ENCODE measurements at regions of chr10 and their contacts with region 1.

Region 1: DNA sequence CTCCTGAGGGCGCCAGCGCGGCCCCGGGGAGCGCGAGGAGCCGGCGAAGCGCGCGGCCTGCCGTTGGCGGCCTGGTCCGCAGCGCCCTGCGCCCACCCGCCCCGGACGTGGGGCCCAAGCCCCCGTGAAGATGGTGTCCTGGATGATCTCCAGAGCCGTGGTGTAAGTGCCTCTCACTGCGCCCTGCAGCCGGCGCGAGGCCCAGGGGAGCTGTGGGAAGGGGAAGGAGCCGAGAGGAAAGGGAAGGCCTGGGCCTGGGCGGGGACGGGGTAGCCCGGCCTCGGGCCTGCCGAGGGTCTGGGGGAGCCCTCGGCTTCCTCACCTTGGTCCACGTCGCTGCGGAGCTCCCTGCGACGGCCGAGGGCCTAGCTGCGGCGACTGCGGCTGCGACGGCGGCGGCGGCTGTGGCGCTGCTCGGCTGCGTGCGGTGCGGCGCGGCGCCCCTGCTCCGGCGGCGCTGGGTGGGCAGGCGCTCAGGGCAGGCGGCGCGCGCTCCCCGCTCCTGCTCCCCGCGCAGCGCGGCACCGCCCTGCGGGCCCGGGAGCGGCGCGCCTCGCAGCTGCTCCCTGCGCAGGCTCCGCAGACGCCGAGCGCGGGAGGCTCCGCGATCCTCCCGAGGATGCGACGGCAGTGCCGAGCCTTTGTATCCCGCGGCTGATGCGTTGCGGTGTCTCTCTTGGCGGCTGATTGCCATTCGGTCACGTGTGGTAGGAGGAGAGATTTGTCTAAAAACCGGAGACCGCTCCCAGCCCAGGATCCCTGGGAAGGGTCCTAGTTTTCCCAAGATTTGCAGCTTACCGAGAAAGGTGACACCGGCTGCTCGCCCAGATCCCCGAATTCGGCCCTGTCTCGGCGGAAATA is 445 bp downstream of the REEP3 start:
- H3K4me3 ChIP-seq: peak overlapping the region; percentile 95
- H3K27ac ChIP-seq: peak overlapping the region; percentile 99
- H3K4me1 ChIP-seq: peaks cover 13% of the 10 kb centered on the region
- CTCF ChIP-seq: peak; percentile 62

Region 2: DNA sequence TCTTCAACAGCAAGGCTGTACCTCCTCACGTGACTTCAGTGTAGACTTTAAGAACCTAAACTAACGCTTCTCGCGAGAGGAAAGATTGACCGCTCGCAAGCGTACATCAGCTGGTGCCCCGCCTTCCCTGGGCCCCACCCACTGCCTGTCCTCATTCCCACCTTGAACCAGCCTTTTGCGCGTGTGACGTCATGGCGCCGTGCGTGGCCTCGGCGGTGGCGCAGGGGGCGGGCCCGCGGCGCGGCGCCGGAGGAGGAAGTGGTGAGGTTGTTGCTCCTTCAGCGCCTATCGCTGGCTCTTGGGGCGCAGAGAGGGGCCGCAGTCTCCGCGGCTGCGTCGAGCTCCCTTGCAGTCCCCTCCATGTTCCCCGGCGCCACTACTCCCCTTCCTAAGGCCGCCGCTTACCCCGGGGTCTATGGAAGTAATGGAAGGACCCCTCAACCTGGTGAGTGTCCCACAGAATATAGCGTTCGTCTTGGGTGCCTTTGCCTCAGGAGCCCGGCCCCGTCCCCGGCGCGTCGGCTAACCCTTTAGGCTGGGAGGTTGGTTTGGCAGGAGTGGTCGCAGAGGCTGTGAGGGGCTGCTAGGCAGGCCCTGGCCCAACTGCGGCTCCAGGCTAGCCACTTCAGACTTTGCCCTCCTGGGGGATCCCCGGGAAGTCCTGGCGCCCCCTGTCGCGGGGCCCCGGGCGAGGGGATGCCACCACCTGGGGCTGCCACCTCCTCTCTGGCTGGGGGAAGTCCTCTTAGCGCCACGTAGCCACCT is 388.4 kb before region 1 on chr10 and contains the start of gene NRBF2:
- CTCF ChIA-PET with region 1: no interaction called
- POLR2A ChIA-PET with region 1: interaction called, 15 read pairs
- H3K4me3 ChIP-seq: peak within 1 kb of the TSS; percentile 83
- H3K27ac ChIP-seq: peak within 1 kb of the TSS; percentile 60
- H3K4me1 ChIP-seq: no peaks in the 10 kb centered on the region
- CTCF ChIP-seq: peak; percentile 90

Region 3: GRCh38 chr10:63268798-63269503 is 252.7 kb before region 1 on chr10:
- CTCF ChIA-PET with region 1: no interaction called
- POLR2A ChIA-PET with region 1: interaction called, 12 read pairs
- H3K4me3 ChIP-seq: peak overlapping the region; percentile 67
- H3K27ac ChIP-seq: peak overlapping the region; percentile 85
- H3K4me1 ChIP-seq: peaks cover 4% of the 10 kb centered on the region
- CTCF ChIP-seq: no peak; the same call in 1 of the 2 replicates

Region 4: GRCh38 chr10:63409465-63410027 is 112.1 kb before region 1 on chr10:
- CTCF ChIA-PET with region 1: no interaction called
- POLR2A ChIA-PET with region 1: no interaction called
- H3K4me3 ChIP-seq: no peak overlapping the region
- H3K27ac ChIP-seq: no peak overlapping the region
- H3K4me1 ChIP-seq: peaks cover 6% of the 10 kb centered on the region; the same call in 1 of the 2 replicates
- CTCF ChIP-seq: no peak

Region 5: DNA sequence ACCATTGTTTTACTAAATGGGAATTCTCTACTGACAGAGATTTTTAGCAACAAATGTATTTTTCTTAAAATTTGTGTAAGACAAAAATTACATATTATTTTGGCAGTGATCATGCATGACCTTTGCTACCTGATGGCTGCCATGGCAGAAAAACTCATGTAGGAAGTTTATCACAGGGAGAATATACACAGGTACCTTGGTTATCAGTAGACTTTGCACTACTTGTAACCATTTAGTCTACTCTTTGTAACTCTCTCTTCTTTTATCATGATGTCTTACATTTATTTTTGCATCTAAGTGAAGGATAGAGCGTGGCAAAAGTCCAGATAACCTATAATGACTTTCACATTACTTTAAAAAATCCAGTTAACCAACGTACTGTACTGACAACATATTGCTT is 33.7 kb after region 1 on chr10:
- CTCF ChIA-PET with region 1: no interaction called
- POLR2A ChIA-PET with region 1: no interaction called
- H3K4me3 ChIP-seq: no peak overlapping the region
- H3K27ac ChIP-seq: no peak overlapping the region
- H3K4me1 ChIP-seq: peaks cover 2% of the 10 kb centered on the region; the same call in 1 of the 2 replicates
- CTCF ChIP-seq: no peak

Region 6: GRCh38 chr10:63636812-63637211 is 115.2 kb after region 1 on chr10:
- CTCF ChIA-PET with region 1: no interaction called
- POLR2A ChIA-PET with region 1: no interaction called
- H3K4me3 ChIP-seq: no peak overlapping the region
- H3K27ac ChIP-seq: no peak overlapping the region
- H3K4me1 ChIP-seq: no peaks in the 10 kb centered on the region
- CTCF ChIP-seq: no peak

Region 7: GRCh38 chr10:63788152-63788821 is 266.6 kb after region 1 on chr10:
- CTCF ChIA-PET with region 1: no interaction called
- POLR2A ChIA-PET with region 1: no interaction called
- H3K4me3 ChIP-seq: no peak overlapping the region
- H3K27ac ChIP-seq: no peak overlapping the region
- H3K4me1 ChIP-seq: no peaks in the 10 kb centered on the region
- CTCF ChIP-seq: no peak